ENCODE measurements at regions of chr5 and their contacts with region 1.

Region 1: DNA sequence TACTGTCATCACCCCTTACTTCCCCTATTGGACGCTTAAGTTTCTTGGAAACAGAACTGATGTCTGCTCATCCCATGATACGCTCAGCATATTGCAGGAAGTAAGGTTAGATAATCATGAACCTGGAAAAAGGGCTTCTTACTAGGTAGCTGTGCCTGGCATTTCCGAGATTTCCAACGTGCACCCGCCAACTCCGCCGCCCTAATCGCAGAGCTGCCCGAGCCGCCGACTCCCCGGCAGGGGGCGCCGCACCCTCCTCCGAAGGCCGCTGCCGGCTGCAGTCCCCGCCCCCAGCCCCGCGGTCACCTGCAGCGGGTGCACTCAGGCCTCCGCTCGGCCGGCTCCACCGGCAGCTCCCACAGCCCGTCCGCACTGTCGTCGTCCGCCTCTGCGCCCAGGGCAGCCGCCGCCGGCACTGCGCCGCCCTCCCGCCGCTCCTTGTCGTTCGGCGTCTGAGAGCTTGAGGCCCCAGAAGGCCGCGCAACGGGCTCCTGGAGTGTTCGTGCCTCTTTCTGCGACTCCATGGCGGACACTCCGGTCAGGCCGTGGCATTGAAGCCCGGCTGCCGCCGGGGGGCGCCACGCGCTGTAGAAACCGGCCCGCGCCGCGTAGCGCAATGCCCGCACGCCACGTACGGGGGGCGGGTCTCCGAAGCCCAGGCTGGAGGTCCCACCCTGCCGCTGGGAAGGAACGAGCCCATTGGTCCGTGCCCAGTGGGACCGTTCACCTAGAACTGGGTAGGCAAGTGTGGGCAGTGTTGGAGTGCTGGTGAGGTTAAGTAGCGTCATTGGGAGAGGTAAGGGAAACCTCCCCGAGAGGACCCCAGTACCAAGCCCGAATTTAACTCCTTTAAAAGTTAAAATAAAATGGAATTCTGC is at the start of gene DTWD2:
- DNase-seq: peak; percentile 97
- H3K4me3 Mint-ChIP-seq: peak within 1 kb of the TSS; percentile 83
- H3K27ac Mint-ChIP-seq: peak within 1 kb of the TSS; percentile 57
- H3K4me1 Mint-ChIP-seq: peaks cover 12% of the 10 kb centered on the region
- H3K27me3 Mint-ChIP-seq: peaks cover 2% of the 10 kb centered on the region
- total RNA-seq, gene DTWD2: 1.8 and 2.2 TPM in 2 replicates

Region 2: DNA sequence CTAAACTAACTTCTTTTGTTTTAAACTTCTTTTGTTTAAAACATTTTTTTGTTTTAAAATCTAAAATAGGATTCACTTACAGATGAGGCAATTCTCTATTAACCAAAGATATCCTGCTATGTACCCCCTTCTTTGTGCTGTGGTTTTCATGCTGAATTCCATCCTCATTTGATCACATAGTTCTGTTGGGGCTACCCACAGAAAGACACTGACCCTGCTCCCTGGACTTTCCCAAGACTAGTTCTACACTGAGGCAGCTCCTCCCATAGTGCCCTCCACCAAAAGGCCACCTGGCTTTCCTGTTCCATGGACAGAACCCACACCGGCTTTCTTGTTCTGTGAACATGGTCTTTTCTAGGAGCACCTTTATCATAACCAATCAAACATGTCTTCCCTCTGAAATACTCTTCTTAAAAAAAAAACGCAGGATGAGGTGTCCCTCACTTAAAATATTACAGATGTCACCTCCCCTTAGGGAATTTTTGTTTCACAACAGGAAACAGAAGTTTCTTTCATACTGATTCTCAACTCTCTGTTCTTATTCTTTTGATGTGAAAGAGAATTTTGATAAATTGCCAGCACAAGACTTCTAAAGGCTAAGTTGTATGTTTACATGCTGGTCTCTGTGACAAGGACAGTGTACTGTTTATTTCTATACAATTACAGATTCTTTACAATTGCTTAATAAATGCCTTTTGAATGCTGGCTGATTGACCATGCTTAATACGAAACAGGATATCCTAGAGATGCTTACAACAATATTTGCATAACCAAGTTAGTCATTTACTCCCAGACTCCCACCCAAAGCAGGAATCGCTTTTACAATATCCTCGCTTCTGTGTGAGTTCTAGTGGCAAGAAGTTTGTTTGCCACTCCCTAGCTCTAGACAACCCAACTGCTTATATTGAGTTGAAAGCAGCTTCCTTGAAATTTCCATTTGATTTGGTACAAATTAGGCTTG is 300.3 kb before region 1 on chr5:
- intact Hi-C with region 1: no loop called
- DNase-seq: no peak
- H3K4me3 Mint-ChIP-seq: no peak overlapping the region
- H3K27ac Mint-ChIP-seq: no peak overlapping the region
- H3K4me1 Mint-ChIP-seq: no peaks in the 10 kb centered on the region
- H3K27me3 Mint-ChIP-seq: no peaks in the 10 kb centered on the region

Region 3: DNA sequence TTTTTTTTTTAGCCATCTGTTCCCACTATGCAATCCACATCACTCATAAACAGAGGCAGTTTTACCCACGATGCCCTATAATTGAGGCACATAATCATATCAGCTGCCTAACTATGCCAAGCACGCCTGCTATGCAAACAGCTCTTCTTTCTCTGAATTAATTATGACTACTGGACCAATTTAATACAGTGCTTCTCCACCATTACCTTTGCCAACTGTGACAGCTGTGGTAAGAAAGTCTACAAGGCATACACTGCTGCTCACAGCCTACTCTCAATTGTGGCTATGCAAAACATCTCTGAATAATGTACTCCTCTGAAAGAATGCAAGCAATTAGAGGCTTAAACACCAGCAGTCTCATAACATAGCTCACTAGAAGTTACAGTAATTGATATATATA is 97.0 kb before region 1 on chr5:
- intact Hi-C with region 1: no loop called
- DNase-seq: no peak
- H3K4me3 Mint-ChIP-seq: no peak overlapping the region
- H3K27ac Mint-ChIP-seq: no peak overlapping the region
- H3K4me1 Mint-ChIP-seq: no peaks in the 10 kb centered on the region
- H3K27me3 Mint-ChIP-seq: no peaks in the 10 kb centered on the region

Region 4: GRCh38 chr5:119031905-119032304 is 43.7 kb after region 1 on chr5:
- intact Hi-C with region 1: loop called (anchors 2 kb)
- DNase-seq: no peak
- H3K4me3 Mint-ChIP-seq: peak overlapping the region; percentile 26
- H3K27ac Mint-ChIP-seq: peak overlapping the region; percentile 7
- H3K4me1 Mint-ChIP-seq: peaks cover 23% of the 10 kb centered on the region
- H3K27me3 Mint-ChIP-seq: no peaks in the 10 kb centered on the region

Region 5: DNA sequence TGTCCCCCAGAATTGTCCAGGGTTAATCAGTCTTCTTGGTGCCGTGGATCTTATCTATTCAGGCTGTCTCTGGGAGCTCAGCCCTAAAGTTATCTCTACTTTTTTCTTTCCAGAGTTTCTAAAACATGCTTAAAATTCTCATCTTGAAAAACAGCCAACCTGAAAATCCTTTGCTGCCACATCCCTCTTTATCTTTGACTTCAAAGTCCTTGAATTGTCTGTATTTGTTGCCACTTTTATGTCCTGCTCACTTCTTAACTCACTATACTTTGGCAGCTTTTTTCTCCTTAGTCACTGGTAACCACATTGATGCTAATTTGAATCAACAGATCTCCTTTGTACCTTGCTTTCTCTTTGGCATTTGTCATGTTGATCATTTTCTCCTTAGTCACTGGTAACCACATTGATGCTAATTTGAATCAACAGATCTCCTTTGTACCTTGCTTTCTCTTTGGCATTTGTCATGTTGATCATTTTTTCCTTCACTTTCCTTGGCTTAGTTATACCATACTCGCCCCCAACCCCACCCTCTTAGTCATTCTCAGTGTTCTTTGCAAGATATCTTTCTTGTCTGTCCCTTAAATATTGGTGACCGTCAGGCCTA is 91.2 kb after region 1 on chr5:
- intact Hi-C with region 1: loop called (anchors 2 kb)
- DNase-seq: peak; percentile 77
- H3K4me3 Mint-ChIP-seq: peak overlapping the region; percentile 65
- H3K27ac Mint-ChIP-seq: peak overlapping the region; percentile 86
- H3K4me1 Mint-ChIP-seq: peaks cover 33% of the 10 kb centered on the region
- H3K27me3 Mint-ChIP-seq: no peaks in the 10 kb centered on the region

Region 6: GRCh38 chr5:119200795-119201194 is 212.6 kb after region 1 on chr5:
- intact Hi-C with region 1: no loop called
- DNase-seq: no peak
- H3K4me3 Mint-ChIP-seq: no peak overlapping the region
- H3K27ac Mint-ChIP-seq: no peak overlapping the region
- H3K4me1 Mint-ChIP-seq: peaks cover 7% of the 10 kb centered on the region
- H3K27me3 Mint-ChIP-seq: no peaks in the 10 kb centered on the region

Region 7: DNA sequence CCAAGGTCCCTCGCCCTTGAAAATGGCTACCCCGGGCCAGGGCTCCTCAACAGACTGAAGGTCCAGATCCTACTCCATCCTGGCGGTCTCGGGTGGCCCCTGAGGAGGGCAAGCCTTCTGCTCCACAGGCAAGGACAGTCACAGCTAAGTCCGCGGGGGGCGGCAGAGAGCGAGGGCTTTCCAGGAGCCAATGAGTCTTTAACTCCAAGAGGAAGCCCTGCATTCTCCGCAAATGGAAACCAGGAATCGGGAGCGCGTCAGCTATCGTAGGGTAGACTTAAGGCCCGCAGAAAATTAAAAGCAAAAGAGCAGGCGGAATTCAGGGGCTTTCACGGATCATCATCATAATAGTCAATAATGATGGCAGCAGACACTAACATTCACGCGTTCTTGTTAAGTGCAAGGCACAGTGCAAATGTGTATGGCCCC is 279.7 kb after region 1 on chr5:
- intact Hi-C with region 1: loop called (anchors 1 kb)
- DNase-seq: peak; percentile 93
- H3K4me3 Mint-ChIP-seq: peak overlapping the region; percentile 95
- H3K27ac Mint-ChIP-seq: peak overlapping the region; percentile 97
- H3K4me1 Mint-ChIP-seq: peaks cover 54% of the 10 kb centered on the region
- H3K27me3 Mint-ChIP-seq: no peaks in the 10 kb centered on the region

Region 8: GRCh38 chr5:119355685-119356611 is 367.7 kb after region 1 on chr5 and contains the start of gene TNFAIP8:
- intact Hi-C with region 1: loop called (anchors 1 kb)
- DNase-seq: peak; percentile 88
- H3K4me3 Mint-ChIP-seq: peak within 1 kb of the TSS; percentile 100
- H3K27ac Mint-ChIP-seq: peak within 1 kb of the TSS; percentile 97
- H3K4me1 Mint-ChIP-seq: peaks cover 61% of the 10 kb centered on the region
- H3K27me3 Mint-ChIP-seq: no peaks in the 10 kb centered on the region
- total RNA-seq, gene TNFAIP8: 188 and 193 TPM in 2 replicates

Region 9: DNA sequence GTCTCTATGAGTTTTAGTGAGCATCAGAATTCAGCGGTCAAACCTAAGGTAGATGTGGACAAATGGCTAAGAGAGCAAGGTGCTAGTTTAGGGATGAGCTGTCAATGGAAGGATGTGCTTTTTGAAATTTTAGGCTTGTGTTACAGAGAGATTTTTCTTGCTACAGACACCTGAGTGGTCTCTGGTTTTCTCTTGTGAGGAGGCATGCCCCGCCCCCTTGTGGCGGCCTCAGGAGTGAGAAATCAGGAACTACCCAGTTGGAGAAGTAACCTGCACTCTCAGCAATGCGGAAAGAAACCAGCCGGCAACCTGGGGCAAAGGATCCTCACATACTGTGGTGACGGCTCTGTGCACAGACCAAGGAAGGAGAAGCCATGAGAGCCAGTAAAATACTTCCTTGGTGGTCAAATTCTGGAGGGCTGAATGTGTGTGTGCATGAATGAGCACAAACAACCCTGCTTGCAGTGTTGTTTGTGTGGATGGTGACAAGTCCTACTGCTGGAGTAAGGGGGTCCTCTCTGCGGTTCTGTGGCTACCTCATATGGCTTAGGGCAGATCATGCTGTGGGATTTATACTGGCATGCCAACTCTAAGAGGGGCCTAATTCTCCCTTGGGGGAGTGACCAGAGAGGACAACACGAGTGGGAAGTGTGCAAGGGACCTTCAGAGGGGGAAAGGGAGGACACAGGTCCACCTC is 447.4 kb after region 1 on chr5:
- intact Hi-C with region 1: loop called (anchors 1 kb)
- DNase-seq: peak; percentile 89
- H3K4me3 Mint-ChIP-seq: no peak overlapping the region
- H3K27ac Mint-ChIP-seq: no peak overlapping the region
- H3K4me1 Mint-ChIP-seq: peaks cover 13% of the 10 kb centered on the region
- H3K27me3 Mint-ChIP-seq: peaks cover 23% of the 10 kb centered on the region

Region 10: GRCh38 chr5:119743927-119744326 is 755.7 kb after region 1 on chr5:
- intact Hi-C with region 1: loop called (anchors 2 kb)
- DNase-seq: peak; percentile 68
- H3K4me3 Mint-ChIP-seq: no peak overlapping the region
- H3K27ac Mint-ChIP-seq: no peak overlapping the region
- H3K4me1 Mint-ChIP-seq: no peaks in the 10 kb centered on the region
- H3K27me3 Mint-ChIP-seq: no peaks in the 10 kb centered on the region

Measured in activated CD4-positive, alpha-beta T cell treated with anti-CD3 and anti-CD28 coated beads, Interleukin-2, amount 10 ng/mL, durations not matched to agents 24 days and 14 days (primary cell).